Psoas muscle (tissue), 8 donors: ENCODE measurements at regions of chr10 and their contacts with region 1.

Region 1: GRCh38 chr10:51321976-51322375 is 247.7 kb downstream of the PRKG1 start:
- DNase-seq: no peak
- ATAC-seq: no peak
- H3K4me3 ChIP-seq: no peak overlapping the region
- H3K27ac ChIP-seq: no peak overlapping the region
- H3K4me1 ChIP-seq: no peaks in the 10 kb centered on the region
- H3K27me3 ChIP-seq: no peaks in the 10 kb centered on the region
- CTCF ChIP-seq: no peak

Region 2: GRCh38 chr10:51074238-51075028 is 247.5 kb before region 1 on chr10 and contains the start of gene PRKG1:
- intact Hi-C with region 1: no loop called
- DNase-seq: peak; percentile 76 to 84
- ATAC-seq: peak; percentile 84 to 92 (median 86)
- H3K4me3 ChIP-seq: peak within 1 kb of the TSS; percentile 85
- H3K27ac ChIP-seq: peak within 1 kb of the TSS; percentile 64
- H3K4me1 ChIP-seq: peaks cover 19% of the 10 kb centered on the region
- H3K27me3 ChIP-seq: peaks cover 0 to 3% (median 0%) of the 10 kb centered on the region in 3 donors
- CTCF ChIP-seq: no peak
- total RNA-seq, gene PRKG1: 31.7 to 49.0 (median 45.2) TPM

Region 3: DNA sequence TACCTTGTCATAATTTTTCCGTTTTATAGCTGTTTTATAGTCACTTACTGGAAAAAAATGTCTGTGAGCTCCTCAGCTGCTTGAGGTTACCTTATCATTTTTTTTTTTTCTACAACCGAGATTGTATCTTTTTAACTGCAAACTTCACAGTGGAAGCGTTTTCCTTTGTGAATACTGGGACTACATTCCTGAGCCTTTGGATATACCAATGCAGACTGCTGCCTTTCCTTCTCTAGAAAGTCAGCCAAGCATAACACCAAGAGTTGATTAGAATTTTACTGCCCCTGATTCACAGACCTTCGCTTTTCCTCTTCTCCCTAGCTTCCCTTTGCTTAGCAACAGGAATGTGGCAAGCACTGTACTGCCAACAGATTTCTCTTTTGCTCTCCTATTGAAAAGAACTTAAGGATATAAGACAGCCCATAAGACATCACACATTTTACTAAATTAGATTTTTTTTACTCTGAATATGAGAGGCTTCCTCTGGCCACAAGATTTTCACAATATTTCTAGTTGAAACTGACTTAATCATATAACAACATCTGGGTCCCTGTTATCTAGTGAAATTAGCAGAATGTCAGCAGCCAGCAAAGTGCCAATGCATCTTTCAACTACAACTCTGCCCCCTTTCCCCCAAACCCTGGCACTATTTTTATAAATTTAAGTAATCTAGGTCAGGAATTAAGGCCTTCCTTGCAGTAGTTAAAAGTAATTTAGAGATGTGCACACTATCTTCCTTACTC is 77.1 kb before region 1 on chr10:
- intact Hi-C with region 1: no loop called
- DNase-seq: no peak
- ATAC-seq: peak in 3 of 4 donors; percentile 34 to 43 (median 40)
- H3K4me3 ChIP-seq: no peak overlapping the region
- H3K27ac ChIP-seq: peak overlapping the region; percentile 6
- H3K4me1 ChIP-seq: peaks cover 43% of the 10 kb centered on the region
- H3K27me3 ChIP-seq: no peaks in the 10 kb centered on the region
- CTCF ChIP-seq: no peak

Region 4: GRCh38 chr10:51363415-51363814 is 41.4 kb after region 1 on chr10:
- intact Hi-C with region 1: loop called in 1 of 2 experiments (anchors 5 kb)
- DNase-seq: no peak
- ATAC-seq: no peak
- H3K4me3 ChIP-seq: no peak overlapping the region
- H3K27ac ChIP-seq: no peak overlapping the region
- H3K4me1 ChIP-seq: peaks cover 12% of the 10 kb centered on the region
- H3K27me3 ChIP-seq: no peaks in the 10 kb centered on the region
- CTCF ChIP-seq: no peak